Gastrocnemius medialis (tissue), 4 donors: ENCODE measurements at regions of chr7 and their contacts with region 1.

Region 1: DNA sequence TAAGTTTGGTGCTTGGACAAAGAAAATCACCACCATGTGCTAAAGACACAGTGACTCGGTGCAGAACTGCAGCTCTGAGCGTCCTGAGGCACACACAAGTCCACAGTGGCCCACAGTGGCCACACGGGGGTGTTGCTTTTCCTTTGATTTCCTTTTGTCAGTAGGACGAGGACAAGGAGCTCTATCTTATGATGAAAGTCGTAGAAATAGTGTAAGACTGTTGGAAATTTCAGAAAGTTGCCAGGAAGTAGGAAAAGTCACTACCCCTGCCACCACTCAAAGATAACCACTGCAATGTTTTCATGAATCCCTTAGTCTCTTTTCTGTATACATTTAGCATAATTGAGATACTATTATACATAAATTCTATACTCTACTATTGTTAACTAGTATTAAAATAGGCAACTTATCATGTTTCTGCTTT is 146.0 kb downstream of the TNS3 start:
- DNase-seq: peak; percentile 41 to 66
- ATAC-seq: peak; percentile 67 to 91
- H3K4me3 ChIP-seq: no peak overlapping the region
- H3K27ac ChIP-seq: no peak overlapping the region
- H3K4me1 ChIP-seq: no peaks in the 10 kb centered on the region
- H3K27me3 ChIP-seq: no peaks in the 10 kb centered on the region
- CTCF ChIP-seq: peak; percentile 63 to 79 (median 70)
- POLR2A ChIP-seq: no peak

Region 2: GRCh38 chr7:47066971-47067614 is 368.8 kb before region 1 on chr7:
- in situ Hi-C with region 1: no loop called
- intact Hi-C with region 1: no loop called
- DNase-seq: no peak
- ATAC-seq: no peak
- H3K4me3 ChIP-seq: no peak overlapping the region
- H3K27ac ChIP-seq: no peak overlapping the region
- H3K4me1 ChIP-seq: no peaks in the 10 kb centered on the region
- H3K27me3 ChIP-seq: no peaks in the 10 kb centered on the region
- CTCF ChIP-seq: no peak
- POLR2A ChIP-seq: no peak

Region 3: GRCh38 chr7:47254081-47255006 is 181.6 kb before region 1 on chr7:
- in situ Hi-C with region 1: loop called in 1 of 4 experiments (anchors 25 kb)
- intact Hi-C with region 1: no loop called
- DNase-seq: peak; percentile 85
- ATAC-seq: peak; percentile 81 to 83
- H3K4me3 ChIP-seq: peak overlapping the region; percentile 60 to 70 (median 68)
- H3K27ac ChIP-seq: peak overlapping the region; percentile 90 to 96 (median 94)
- H3K4me1 ChIP-seq: peaks cover 16 to 20% of the 10 kb centered on the region in 2 donors
- H3K27me3 ChIP-seq: no peaks in the 10 kb centered on the region
- CTCF ChIP-seq: peak; percentile 79 to 100 (median 97)
- POLR2A ChIP-seq: peak in 1 of 2 donors; percentile 39

Region 4: GRCh38 chr7:47266131-47266706 is 169.7 kb before region 1 on chr7:
- in situ Hi-C with region 1: loop called in 2 of 4 experiments (anchors 10 to 25 kb)
- intact Hi-C with region 1: loop called (anchors 5 kb)
- DNase-seq: peak; percentile 29 to 55
- ATAC-seq: peak; percentile 82 to 89
- H3K4me3 ChIP-seq: no peak overlapping the region
- H3K27ac ChIP-seq: peak overlapping the region in 3 of 4 donors; percentile 32 to 66 (median 55)
- H3K4me1 ChIP-seq: peaks cover 4 to 12% of the 10 kb centered on the region in 2 donors
- H3K27me3 ChIP-seq: no peaks in the 10 kb centered on the region
- CTCF ChIP-seq: peak; percentile 90 to 96 (median 93)
- POLR2A ChIP-seq: no peak

Region 5: DNA sequence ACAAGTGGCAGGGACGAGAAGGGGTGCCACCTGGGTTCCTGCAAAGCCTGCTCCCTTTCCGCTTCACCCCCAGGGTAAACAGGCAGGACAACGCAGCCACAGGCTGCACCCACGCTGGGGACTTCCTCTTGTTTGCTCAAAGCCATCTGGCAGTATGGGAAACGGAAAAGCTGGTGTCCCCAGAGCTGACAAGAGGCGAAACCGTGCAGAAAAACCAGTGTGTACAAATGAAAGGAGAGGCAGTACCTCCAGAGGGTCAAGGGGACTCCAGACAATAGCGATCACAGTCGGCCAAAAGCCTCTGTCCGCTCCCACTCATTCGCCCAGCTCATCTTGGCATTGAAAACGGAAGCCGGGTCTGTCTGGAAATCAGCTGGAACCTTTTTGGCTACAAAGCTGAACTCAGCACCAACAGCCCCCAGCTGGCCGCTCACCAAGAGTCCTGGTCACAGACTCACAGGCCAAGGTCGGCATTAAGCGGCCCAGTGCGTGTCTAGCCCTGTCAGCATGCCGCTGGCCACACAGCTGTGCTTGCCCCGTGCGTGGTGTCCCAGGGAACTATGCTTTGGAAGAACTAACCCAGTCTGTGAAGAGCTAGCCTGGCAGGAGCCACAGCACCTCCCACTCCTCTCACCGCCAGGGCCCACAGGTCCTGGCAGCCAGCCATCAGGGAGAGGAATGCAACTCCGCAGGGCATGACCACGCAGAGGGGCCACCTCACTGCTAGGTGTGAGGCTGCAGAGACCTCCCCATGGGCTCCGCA is 135.6 kb after region 1 on chr7:
- in situ Hi-C with region 1: loop called in 3 of 4 experiments (anchors 10 to 25 kb)
- intact Hi-C with region 1: no loop called
- DNase-seq: peak in 1 of 2 donors; percentile 37
- ATAC-seq: peak; percentile 36 to 39
- H3K4me3 ChIP-seq: peak overlapping the region in 3 of 4 donors; percentile 10 to 49 (median 20)
- H3K27ac ChIP-seq: peak overlapping the region; percentile 45 to 63 (median 61)
- H3K4me1 ChIP-seq: peaks cover 20 to 22% of the 10 kb centered on the region in 2 donors
- H3K27me3 ChIP-seq: no peaks in the 10 kb centered on the region
- CTCF ChIP-seq: no peak
- POLR2A ChIP-seq: no peak

Region 6: DNA sequence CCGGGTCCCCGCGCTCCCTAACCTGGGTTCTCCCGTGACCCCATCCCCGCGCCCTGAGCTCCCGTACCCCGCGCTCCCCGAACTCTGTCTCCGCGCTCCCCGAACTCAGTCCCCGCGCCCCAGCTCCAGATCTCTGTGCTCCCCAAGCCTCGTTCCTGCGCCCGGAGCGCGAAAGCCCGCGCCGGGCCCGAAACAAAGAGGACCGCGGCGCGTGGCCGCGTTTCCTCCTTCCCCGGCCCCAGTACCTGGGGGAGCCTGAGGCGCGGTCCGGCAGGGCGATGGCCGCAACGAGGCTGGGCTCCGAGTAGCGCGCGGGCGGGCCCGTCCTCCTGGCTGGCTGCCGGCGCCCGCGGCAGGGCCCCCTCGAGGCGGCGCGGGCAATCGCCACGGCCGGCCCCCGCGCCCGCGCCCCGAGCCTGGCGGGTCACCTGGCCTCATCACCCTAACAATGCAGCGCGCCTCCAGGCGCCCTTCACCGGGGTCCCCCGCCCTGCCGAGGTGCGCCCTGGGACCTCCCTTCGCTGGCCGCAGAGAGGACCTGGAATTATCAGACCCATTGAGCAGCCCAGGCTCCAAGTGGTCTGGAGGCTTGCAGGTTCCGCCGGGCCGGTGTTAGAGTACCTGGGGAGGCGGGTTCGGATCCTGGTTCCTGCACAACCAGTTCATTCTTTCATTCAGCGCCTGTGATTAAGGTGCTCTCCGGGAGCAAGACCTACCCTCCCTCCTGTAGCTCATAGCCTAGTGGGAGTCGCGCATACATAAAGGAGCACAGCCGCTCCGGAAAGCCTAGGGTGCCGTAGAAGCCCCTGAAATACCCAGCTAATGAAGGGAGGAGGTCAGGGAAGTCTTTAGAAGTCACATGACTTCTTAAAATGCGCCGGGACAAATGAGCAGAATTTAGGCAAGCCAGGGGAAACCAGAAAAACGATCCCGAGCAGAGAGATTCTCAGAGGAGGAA is 146.2 kb after region 1 on chr7 and contains the start of gene TNS3:
- in situ Hi-C with region 1: loop called in 3 of 4 experiments (anchors 10 to 25 kb)
- intact Hi-C with region 1: no loop called
- DNase-seq: no peak
- ATAC-seq: peak; percentile 37 to 50
- H3K4me3 ChIP-seq: peak within 1 kb of the TSS; percentile 70 to 84 (median 74)
- H3K27ac ChIP-seq: peak within 1 kb of the TSS; percentile 62 to 76 (median 70)
- H3K4me1 ChIP-seq: peaks cover 21 to 27% of the 10 kb centered on the region in 2 donors
- H3K27me3 ChIP-seq: peaks cover 0 to 3% (median 0%) of the 10 kb centered on the region in 3 donors
- CTCF ChIP-seq: peak in 4 of 5 experiments; percentile 6 to 41 (median 25)
- POLR2A ChIP-seq: peak in 1 of 2 donors; percentile 20
- total RNA-seq, gene TNS3: 39.4 to 64.3 (median 50.5) TPM

Region 7: GRCh38 chr7:47827351-47827756 is 391.5 kb after region 1 on chr7:
- in situ Hi-C with region 1: loop called in 1 of 4 experiments (anchors 10 kb)
- intact Hi-C with region 1: no loop called
- DNase-seq: no peak
- ATAC-seq: no peak
- H3K4me3 ChIP-seq: no peak overlapping the region
- H3K27ac ChIP-seq: no peak overlapping the region
- H3K4me1 ChIP-seq: no peaks in the 10 kb centered on the region
- H3K27me3 ChIP-seq: no peaks in the 10 kb centered on the region
- CTCF ChIP-seq: no peak
- POLR2A ChIP-seq: no peak